ENCODE measurements at regions of chr14 and their contacts with region 1.

Region 1: DNA sequence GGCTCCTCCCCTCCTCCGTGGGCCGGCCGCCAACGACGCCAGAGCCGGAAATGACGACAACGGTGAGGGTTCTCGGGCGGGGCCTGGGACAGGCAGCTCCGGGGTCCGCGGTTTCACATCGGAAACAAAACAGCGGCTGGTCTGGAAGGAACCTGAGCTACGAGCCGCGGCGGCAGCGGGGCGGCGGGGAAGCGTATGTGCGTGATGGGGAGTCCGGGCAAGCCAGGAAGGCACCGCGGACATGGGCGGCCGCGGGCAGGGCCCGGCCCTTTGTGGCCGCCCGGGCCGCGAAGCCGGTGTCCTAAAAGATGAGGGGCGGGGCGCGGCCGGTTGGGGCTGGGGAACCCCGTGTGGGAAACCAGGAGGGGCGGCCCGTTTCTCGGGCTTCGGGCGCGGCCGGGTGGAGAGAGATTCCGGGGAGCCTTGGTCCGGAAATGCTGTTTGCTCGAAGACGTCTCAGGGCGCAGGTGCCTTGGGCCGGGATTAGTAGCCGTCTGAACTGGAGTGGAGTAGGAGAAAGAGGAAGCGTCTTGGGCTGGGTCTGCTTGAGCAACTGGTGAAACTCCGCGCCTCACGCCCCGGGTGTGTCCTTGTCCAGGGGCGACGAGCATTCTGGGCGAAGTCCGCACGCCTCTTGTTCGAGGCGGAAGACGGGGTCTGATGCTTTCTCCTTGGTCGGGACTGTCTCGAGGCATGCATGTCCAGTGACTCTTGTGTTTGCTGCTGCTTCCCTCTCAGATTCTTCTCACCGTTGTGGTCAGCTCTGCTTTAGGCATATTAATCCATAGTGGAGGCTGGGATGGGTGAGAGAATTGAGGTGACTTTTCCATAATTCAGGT is at the start of gene PSEN1:
- DNase-seq: peak; percentile 98
- H3K4me3 Mint-ChIP-seq: peak within 1 kb of the TSS; percentile 86
- H3K27ac Mint-ChIP-seq: peak within 1 kb of the TSS; percentile 100
- H3K4me1 Mint-ChIP-seq: peaks cover 19% of the 10 kb centered on the region
- H3K27me3 Mint-ChIP-seq: no peaks in the 10 kb centered on the region
- total RNA-seq, gene PSEN1: 41.1 and 41.9 TPM in 2 replicates

Region 2: GRCh38 chr14:72926292-72927028 is 210.1 kb before region 1 on chr14 and contains the start of gene DCAF4:
- intact Hi-C with region 1: loop called (anchors 5 kb)
- DNase-seq: peak; percentile 94
- H3K4me3 Mint-ChIP-seq: peak within 1 kb of the TSS; percentile 90
- H3K27ac Mint-ChIP-seq: peak within 1 kb of the TSS; percentile 95
- H3K4me1 Mint-ChIP-seq: peaks cover 8% of the 10 kb centered on the region
- H3K27me3 Mint-ChIP-seq: peaks cover 16% of the 10 kb centered on the region
- total RNA-seq, gene DCAF4: 17.1 and 20.4 TPM in 2 replicates

Region 3: DNA sequence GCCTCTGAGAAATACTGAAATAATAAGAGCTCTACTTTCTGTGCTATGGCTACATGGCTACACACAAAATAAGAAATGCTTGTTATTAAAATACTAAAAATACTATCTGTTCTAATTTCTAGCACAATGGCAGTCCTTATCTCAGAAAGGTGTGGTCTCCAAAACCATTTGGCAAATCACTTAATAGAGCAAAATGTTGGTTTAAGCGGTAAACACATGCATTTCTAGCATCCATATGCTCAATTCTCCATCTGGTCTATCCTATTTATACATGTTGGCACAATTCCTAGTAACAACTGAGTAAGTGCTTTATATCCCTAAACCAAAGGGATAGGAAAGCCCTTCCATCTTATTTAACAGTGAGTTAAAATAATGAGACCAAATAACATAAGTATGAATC is 207.7 kb after region 1 on chr14:
- intact Hi-C with region 1: no loop called
- DNase-seq: no peak
- H3K4me3 Mint-ChIP-seq: no peak overlapping the region
- H3K27ac Mint-ChIP-seq: no peak overlapping the region
- H3K4me1 Mint-ChIP-seq: no peaks in the 10 kb centered on the region
- H3K27me3 Mint-ChIP-seq: no peaks in the 10 kb centered on the region